ENCODE measurements at regions of chr19 and their contacts with region 1.

Region 1: GRCh38 chr19:6126335-6126974 is 9.0 kb upstream of the ACSBG2 start:
- DNase-seq: peak in 1 of 2 donors; percentile 49
- H3K4me3 ChIP-seq: no peak overlapping the region
- H3K27ac ChIP-seq: no peak overlapping the region
- H3K4me1 ChIP-seq: no peaks in the 10 kb centered on the region
- H3K27me3 ChIP-seq: no peaks in the 10 kb centered on the region
- CTCF ChIP-seq: peak in 1 of 7 experiments; percentile 10
- EP300 ChIP-seq: no peak
- POLR2A ChIP-seq: no peak

Region 2: GRCh38 chr19:5665796-5666513 is 460.5 kb before region 1 on chr19:
- intact Hi-C with region 1: no loop called
- DNase-seq: no peak
- H3K4me3 ChIP-seq: no peak overlapping the region
- H3K27ac ChIP-seq: peak overlapping the region in 1 of 5 donors; percentile 1
- H3K4me1 ChIP-seq: no peaks in the 10 kb centered on the region
- H3K27me3 ChIP-seq: no peaks in the 10 kb centered on the region
- CTCF ChIP-seq: no peak
- EP300 ChIP-seq: no peak
- POLR2A ChIP-seq: no peak

Region 3: DNA sequence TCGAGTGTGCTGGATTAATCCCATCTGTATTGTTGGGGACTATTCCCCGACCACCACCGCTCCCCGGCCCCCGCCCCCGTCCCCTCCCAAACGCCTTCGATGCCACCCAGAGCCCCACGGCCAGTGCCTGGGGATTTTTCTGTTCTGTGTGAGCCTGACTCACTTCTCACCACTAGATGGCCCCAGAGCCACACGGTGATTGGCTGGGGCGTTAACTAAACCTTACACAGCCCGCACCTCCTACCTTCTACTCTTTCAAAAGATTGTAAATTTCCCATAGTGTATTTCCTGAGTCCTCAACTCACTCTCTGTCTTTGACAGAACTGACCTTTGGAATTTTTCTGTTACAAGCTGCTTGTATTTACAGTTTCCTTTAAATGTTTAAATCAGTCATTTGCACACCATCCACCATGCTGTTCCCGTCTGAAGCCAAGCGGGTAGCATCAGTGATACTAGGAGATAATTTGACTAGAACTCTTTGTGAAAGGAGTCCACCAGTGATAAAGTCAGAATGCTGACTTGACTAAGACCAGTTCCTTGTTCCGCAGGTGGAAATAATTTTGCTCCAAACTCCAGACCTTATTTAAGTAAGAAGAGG is 77.5 kb before region 1 on chr19:
- intact Hi-C with region 1: loop called (anchors 2 kb)
- DNase-seq: peak; percentile 83 to 94
- H3K4me3 ChIP-seq: no peak overlapping the region
- H3K27ac ChIP-seq: peak overlapping the region in 1 of 5 donors; percentile 65
- H3K4me1 ChIP-seq: peaks cover 6 to 22% (median 16%) of the 10 kb centered on the region in 4 donors
- H3K27me3 ChIP-seq: no peaks in the 10 kb centered on the region
- CTCF ChIP-seq: peak in 5 of 7 experiments; percentile 82 to 90 (median 86)
- EP300 ChIP-seq: no peak
- POLR2A ChIP-seq: no peak

Measured in stomach (tissue), 19 donors.